Activated B cell treated with CpG ODN at 0.5 μM for 24 hours (primary cell): ENCODE measurements at regions of chrX and their contacts with region 1.

Region 1: GRCh38 chrX:131841496-131842410 is 181.3 kb upstream of the STK26 start:
- DNase-seq: no peak
- ATAC-seq: peak; percentile 70
- H3K4me3 Mint-ChIP-seq: no peak overlapping the region
- H3K27ac Mint-ChIP-seq: no peak overlapping the region
- H3K4me1 Mint-ChIP-seq: peaks cover 3% of the 10 kb centered on the region
- H3K27me3 Mint-ChIP-seq: no peaks in the 10 kb centered on the region
- CTCF ChIP-seq: no peak

Region 2: GRCh38 chrX:131987252-131987651 is 145.5 kb after region 1 on chrX:
- CTCF ChIA-PET with region 1: no interaction called
- POLR2A ChIA-PET with region 1: no interaction called
- intact Hi-C with region 1: loop called (anchors 5 kb)
- DNase-seq: no peak
- ATAC-seq: peak; percentile 92
- H3K4me3 Mint-ChIP-seq: peak overlapping the region; percentile 64
- H3K27ac Mint-ChIP-seq: peak overlapping the region; percentile 97
- H3K4me1 Mint-ChIP-seq: peaks cover 43% of the 10 kb centered on the region
- H3K27me3 Mint-ChIP-seq: no peaks in the 10 kb centered on the region
- CTCF ChIP-seq: no peak

Region 3: GRCh38 chrX:132071260-132071659 is 229.5 kb after region 1 on chrX:
- CTCF ChIA-PET with region 1: interaction called, 15 read pairs
- POLR2A ChIA-PET with region 1: no interaction called
- intact Hi-C with region 1: loop called (anchors 1 kb)
- DNase-seq: no peak
- ATAC-seq: no peak
- H3K4me3 Mint-ChIP-seq: no peak overlapping the region
- H3K27ac Mint-ChIP-seq: no peak overlapping the region
- H3K4me1 Mint-ChIP-seq: no peaks in the 10 kb centered on the region
- H3K27me3 Mint-ChIP-seq: no peaks in the 10 kb centered on the region
- CTCF ChIP-seq: no peak